GM12878 (cell line): ENCODE measurements at regions of chr6 and their contacts with region 1.

Region 1: GRCh38 chr6:6331946-6332601 is 11.6 kb upstream of the F13A1 start:
- DNase-seq: peak; percentile 95
- ATAC-seq: peak; percentile 81
- H3K4me3 ChIP-seq: peak overlapping the region; percentile 40; the same call in 1 of the 2 replicates
- H3K27ac ChIP-seq: peak overlapping the region; percentile 97
- H3K4me1 ChIP-seq: peaks cover 38% of the 10 kb centered on the region
- H3K27me3 ChIP-seq: no peaks in the 10 kb centered on the region
- CTCF ChIP-seq: no peak
- EP300 ChIP-seq: peak in 1 of 2 experiments; percentile 64; a peak in 3 of 4 replicates
- POLR2A ChIP-seq: no peak
- RAD21 ChIP-seq: 0 out of 2 replicates have a peak, but pooled peaks have one; percentile 3

Region 2: GRCh38 chr6:6293317-6293716 is 38.8 kb before region 1 on chr6:
- CTCF ChIA-PET with region 1: interaction called, 5 read pairs
- POLR2A ChIA-PET with region 1: interaction called, 10 read pairs
- RAD21 ChIA-PET with region 1: interaction called, 9 read pairs
- SMC1A ChIA-PET with region 1: interaction called, 5 read pairs
- in situ Hi-C with region 1: no loop called
- intact Hi-C with region 1: no loop called
- DNase-seq: no peak
- ATAC-seq: peak; percentile 64
- H3K4me3 ChIP-seq: no peak overlapping the region
- H3K27ac ChIP-seq: no peak overlapping the region
- H3K4me1 ChIP-seq: no peaks in the 10 kb centered on the region
- H3K27me3 ChIP-seq: no peaks in the 10 kb centered on the region
- CTCF ChIP-seq: no peak
- EP300 ChIP-seq: no peak
- POLR2A ChIP-seq: no peak
- RAD21 ChIP-seq: no peak

Region 3: DNA sequence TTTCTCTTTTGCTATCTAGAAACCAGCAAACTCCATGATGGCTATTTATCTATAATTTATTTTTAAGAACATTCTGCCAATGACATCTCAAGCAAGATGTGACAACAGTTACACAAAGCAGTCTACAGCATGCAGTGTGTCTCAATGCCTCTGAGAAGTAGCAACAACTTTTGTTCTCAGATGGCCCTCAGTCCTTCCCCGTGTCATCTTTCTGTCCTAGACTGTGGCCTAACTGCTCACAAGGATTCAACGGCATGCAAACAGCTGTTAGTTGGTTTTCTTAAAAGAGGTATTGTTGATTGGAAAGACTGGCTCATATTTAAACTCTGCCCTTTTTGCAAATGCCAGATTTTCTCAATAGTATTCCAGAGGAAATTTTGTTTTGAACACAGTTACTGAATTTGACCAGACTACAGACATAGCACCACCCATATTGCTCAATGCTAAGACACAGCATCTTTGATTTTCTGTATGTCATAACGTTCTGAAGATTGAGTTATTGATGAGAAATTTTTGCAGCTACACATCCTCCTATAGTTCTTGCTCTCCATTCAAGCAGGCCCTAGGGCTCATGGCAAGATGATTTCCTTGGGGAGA is 14.5 kb after region 1 on chr6:
- CTCF ChIA-PET with region 1: interaction called, 6 read pairs
- POLR2A ChIA-PET with region 1: no interaction called
- RAD21 ChIA-PET with region 1: interaction called, 5 read pairs
- SMC1A ChIA-PET with region 1: interaction called, 53 read pairs
- in situ Hi-C with region 1: no loop called
- intact Hi-C with region 1: no loop called
- DNase-seq: no peak
- ATAC-seq: no peak
- H3K4me3 ChIP-seq: no peak overlapping the region
- H3K27ac ChIP-seq: no peak overlapping the region
- H3K4me1 ChIP-seq: no peaks in the 10 kb centered on the region
- H3K27me3 ChIP-seq: no peaks in the 10 kb centered on the region
- CTCF ChIP-seq: no peak
- EP300 ChIP-seq: no peak
- POLR2A ChIP-seq: no peak
- RAD21 ChIP-seq: no peak

Region 4: DNA sequence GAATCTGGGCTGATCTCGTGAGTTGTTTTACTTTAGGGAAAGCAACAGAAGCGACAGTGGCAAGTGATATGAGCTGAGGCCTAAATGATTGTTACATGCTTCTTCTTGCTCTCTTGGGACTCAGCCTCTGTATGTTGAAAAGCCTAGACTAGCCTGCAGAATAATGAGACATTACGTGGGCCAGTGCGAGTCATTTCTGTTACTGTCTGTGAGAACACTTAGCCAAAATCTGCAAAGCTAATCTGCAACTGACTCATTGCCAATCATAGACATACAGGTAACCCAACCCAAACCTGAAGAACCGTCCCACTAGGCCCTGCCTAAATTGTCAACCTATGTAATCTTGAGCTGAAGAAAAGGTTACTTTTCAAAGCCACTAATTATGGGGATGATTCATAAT is 65.8 kb after region 1 on chr6:
- CTCF ChIA-PET with region 1: interaction called, 45 read pairs
- POLR2A ChIA-PET with region 1: interaction called, 69 read pairs
- RAD21 ChIA-PET with region 1: interaction called, 202 read pairs
- SMC1A ChIA-PET with region 1: interaction called, 217 read pairs
- in situ Hi-C with region 1: no loop called
- intact Hi-C with region 1: no loop called
- DNase-seq: no peak
- ATAC-seq: peak; percentile 19
- H3K4me3 ChIP-seq: no peak overlapping the region
- H3K27ac ChIP-seq: no peak overlapping the region
- H3K4me1 ChIP-seq: peaks cover 15% of the 10 kb centered on the region
- H3K27me3 ChIP-seq: no peaks in the 10 kb centered on the region
- CTCF ChIP-seq: no peak
- EP300 ChIP-seq: no peak
- POLR2A ChIP-seq: no peak
- RAD21 ChIP-seq: no peak

Region 5: DNA sequence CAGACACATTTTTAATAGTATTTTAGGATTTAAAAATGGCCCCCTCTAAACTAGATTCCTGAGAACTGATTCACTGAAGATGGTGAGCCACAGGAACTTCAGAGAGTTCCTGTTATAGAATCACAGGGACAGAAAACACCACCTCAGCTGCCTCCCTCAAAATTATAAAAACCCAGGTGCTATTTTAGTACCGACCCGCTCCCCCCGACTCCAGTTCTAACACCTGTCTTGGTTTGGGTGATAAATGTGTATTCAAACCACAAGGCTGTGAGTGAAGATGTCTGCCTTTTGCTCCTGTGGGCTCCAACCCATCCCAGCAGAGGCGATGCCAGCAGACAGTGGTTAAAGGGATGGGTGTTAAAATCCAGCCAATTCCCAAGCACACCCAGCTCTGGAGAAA is 129.1 kb after region 1 on chr6:
- CTCF ChIA-PET with region 1: interaction called, 3 read pairs
- POLR2A ChIA-PET with region 1: no interaction called
- RAD21 ChIA-PET with region 1: interaction called, 10 read pairs
- SMC1A ChIA-PET with region 1: interaction called, 6 read pairs
- in situ Hi-C with region 1: no loop called
- intact Hi-C with region 1: no loop called
- DNase-seq: no peak
- ATAC-seq: peak; percentile 82
- H3K4me3 ChIP-seq: no peak overlapping the region
- H3K27ac ChIP-seq: no peak overlapping the region; the same call in 1 of the 2 replicates
- H3K4me1 ChIP-seq: peaks cover 6% of the 10 kb centered on the region; the same call in 1 of the 2 replicates
- H3K27me3 ChIP-seq: no peaks in the 10 kb centered on the region
- CTCF ChIP-seq: no peak
- EP300 ChIP-seq: peak in 1 of 2 experiments; percentile 67; a peak in 2 of 4 replicates
- POLR2A ChIP-seq: no peak
- RAD21 ChIP-seq: no peak

Region 6: GRCh38 chr6:6515691-6516607 is 183.9 kb after region 1 on chr6:
- CTCF ChIA-PET with region 1: interaction called, 4 read pairs
- POLR2A ChIA-PET with region 1: no interaction called
- RAD21 ChIA-PET with region 1: interaction called, 10 read pairs
- SMC1A ChIA-PET with region 1: interaction called, 3 read pairs
- in situ Hi-C with region 1: no loop called
- intact Hi-C with region 1: no loop called
- DNase-seq: peak; percentile 84
- ATAC-seq: peak; percentile 89
- H3K4me3 ChIP-seq: no peak overlapping the region
- H3K27ac ChIP-seq: peak overlapping the region; percentile 34
- H3K4me1 ChIP-seq: peaks cover 26% of the 10 kb centered on the region
- H3K27me3 ChIP-seq: no peaks in the 10 kb centered on the region
- CTCF ChIP-seq: no peak
- EP300 ChIP-seq: peak; percentile 82 to 96
- POLR2A ChIP-seq: no peak
- RAD21 ChIP-seq: no peak